CD8-positive, alpha-beta T cell (primary cell): ENCODE measurements at regions of chr14 and their contacts with region 1.

Region 1: DNA sequence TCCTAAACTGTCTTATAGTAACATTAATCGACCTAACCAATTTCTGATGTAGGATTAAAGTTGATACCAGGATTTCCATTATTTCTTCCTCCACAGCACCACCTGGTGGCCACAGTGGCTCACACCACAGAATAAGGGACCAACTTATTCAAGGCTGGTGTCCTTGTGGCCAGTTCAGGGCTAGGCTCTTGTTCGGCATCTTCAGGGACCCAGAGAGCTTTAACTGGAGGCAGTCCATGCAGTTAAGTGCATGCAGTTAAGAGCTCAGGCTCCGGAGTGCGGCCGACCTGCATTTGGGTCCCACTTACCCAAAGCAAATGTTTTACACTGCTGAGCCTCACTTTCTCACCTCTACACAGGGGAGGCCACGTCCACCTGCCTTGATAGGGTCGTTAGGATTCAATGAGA is 42.0 kb upstream of the GPR68 start:
- DNase-seq: peak; percentile 62 to 87 (median 81)
- ATAC-seq: peak; percentile 83
- H3K4me3 ChIP-seq: no peak overlapping the region
- H3K4me3 Mint-ChIP-seq: no peak overlapping the region
- H3K27ac ChIP-seq: no peak overlapping the region
- H3K27ac Mint-ChIP-seq: peak overlapping the region; percentile 19
- H3K4me1 ChIP-seq: no peaks in the 10 kb centered on the region
- H3K4me1 Mint-ChIP-seq: peaks cover 5% of the 10 kb centered on the region
- H3K27me3 ChIP-seq: no peaks in the 10 kb centered on the region
- H3K27me3 Mint-ChIP-seq: no peaks in the 10 kb centered on the region
- CTCF ChIP-seq: peak; percentile 90

Region 2: DNA sequence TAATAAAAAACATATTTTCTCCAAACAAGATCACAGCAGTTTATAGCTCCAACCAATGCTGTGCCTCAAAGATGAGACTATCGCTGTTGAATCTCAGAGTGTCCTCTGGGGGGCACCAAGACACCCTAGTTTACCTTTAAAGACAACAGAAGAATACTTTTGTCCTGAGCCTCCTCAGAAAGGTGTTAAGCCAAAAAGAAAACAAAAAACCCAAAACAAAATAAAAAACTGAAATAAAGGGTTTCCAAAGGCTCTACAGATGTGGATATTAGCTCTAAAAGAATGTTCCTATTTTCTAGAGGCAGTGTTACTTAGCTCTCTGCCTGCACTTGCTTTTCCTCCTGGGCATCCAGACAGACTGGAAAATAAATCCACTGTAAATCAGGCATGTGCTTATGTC is 383.4 kb before region 1 on chr14:
- CTCF ChIA-PET with region 1: interaction called, 15 read pairs
- POLR2A ChIA-PET with region 1: no interaction called
- intact Hi-C with region 1: loop called (anchors 2 kb)
- DNase-seq: peak; percentile 12 to 77 (median 59)
- ATAC-seq: peak; percentile 83
- H3K4me3 ChIP-seq: no peak overlapping the region
- H3K4me3 Mint-ChIP-seq: no peak overlapping the region
- H3K27ac ChIP-seq: no peak overlapping the region
- H3K27ac Mint-ChIP-seq: no peak overlapping the region
- H3K4me1 ChIP-seq: no peaks in the 10 kb centered on the region
- H3K4me1 Mint-ChIP-seq: no peaks in the 10 kb centered on the region
- H3K27me3 ChIP-seq: no peaks in the 10 kb centered on the region
- H3K27me3 Mint-ChIP-seq: no peaks in the 10 kb centered on the region
- CTCF ChIP-seq: peak; percentile 83

Region 3: DNA sequence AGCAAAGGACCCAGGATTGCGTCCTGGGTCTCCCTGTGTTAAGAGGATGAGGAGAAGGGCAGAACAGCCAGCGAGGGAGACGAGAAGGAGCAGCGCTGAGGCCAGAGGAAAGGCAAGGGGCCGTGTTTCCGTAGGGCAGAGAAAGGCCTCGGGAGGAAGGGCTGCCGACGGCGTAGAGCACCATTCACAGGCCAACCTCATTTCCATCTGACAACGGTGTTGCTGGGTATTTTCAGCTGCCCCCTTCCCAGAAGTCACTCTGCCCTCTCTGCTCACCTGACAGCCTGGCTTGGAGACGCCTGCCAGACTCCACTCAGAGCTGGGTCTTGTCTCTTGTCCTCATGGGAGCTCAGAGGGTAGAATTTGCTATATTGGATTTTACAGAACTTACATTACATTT is 93.5 kb before region 1 on chr14:
- CTCF ChIA-PET with region 1: interaction called, 4 read pairs
- POLR2A ChIA-PET with region 1: no interaction called
- intact Hi-C with region 1: loop called in 1 of 2 experiments (anchors 5 kb)
- DNase-seq: no peak
- ATAC-seq: no peak
- H3K4me3 ChIP-seq: no peak overlapping the region
- H3K4me3 Mint-ChIP-seq: no peak overlapping the region
- H3K27ac ChIP-seq: no peak overlapping the region
- H3K27ac Mint-ChIP-seq: no peak overlapping the region
- H3K4me1 ChIP-seq: peaks cover 13% of the 10 kb centered on the region
- H3K4me1 Mint-ChIP-seq: peaks cover 20% of the 10 kb centered on the region
- H3K27me3 ChIP-seq: no peaks in the 10 kb centered on the region
- H3K27me3 Mint-ChIP-seq: no peaks in the 10 kb centered on the region
- CTCF ChIP-seq: no peak

Region 4: GRCh38 chr14:91228112-91229004 is 58.2 kb before region 1 on chr14:
- CTCF ChIA-PET with region 1: interaction called, 10 read pairs
- POLR2A ChIA-PET with region 1: interaction called, 6 read pairs
- intact Hi-C with region 1: loop called in 1 of 2 experiments (anchors 2 kb)
- DNase-seq: peak; percentile 36 to 96 (median 75)
- ATAC-seq: peak; percentile 77
- H3K4me3 ChIP-seq: no peak overlapping the region
- H3K4me3 Mint-ChIP-seq: peak overlapping the region; percentile 65
- H3K27ac ChIP-seq: peak overlapping the region; percentile 6 to 85
- H3K27ac Mint-ChIP-seq: peak overlapping the region; percentile 94
- H3K4me1 ChIP-seq: peaks cover 87% of the 10 kb centered on the region
- H3K4me1 Mint-ChIP-seq: peaks cover 89% of the 10 kb centered on the region
- H3K27me3 ChIP-seq: no peaks in the 10 kb centered on the region
- H3K27me3 Mint-ChIP-seq: no peaks in the 10 kb centered on the region
- CTCF ChIP-seq: no peak

Region 5: GRCh38 chr14:91249841-91250616 is 36.5 kb before region 1 on chr14:
- CTCF ChIA-PET with region 1: interaction called, 17 read pairs
- POLR2A ChIA-PET with region 1: interaction called, 5 read pairs
- intact Hi-C with region 1: no loop called
- DNase-seq: peak in 5 of 9 experiments; percentile 28 to 78 (median 45)
- ATAC-seq: no peak
- H3K4me3 ChIP-seq: no peak overlapping the region
- H3K4me3 Mint-ChIP-seq: peak overlapping the region; percentile 47
- H3K27ac ChIP-seq: peak overlapping the region; percentile 43 to 66
- H3K27ac Mint-ChIP-seq: peak overlapping the region; percentile 92
- H3K4me1 ChIP-seq: peaks cover 70% of the 10 kb centered on the region
- H3K4me1 Mint-ChIP-seq: peaks cover 78% of the 10 kb centered on the region
- H3K27me3 ChIP-seq: no peaks in the 10 kb centered on the region
- H3K27me3 Mint-ChIP-seq: no peaks in the 10 kb centered on the region
- CTCF ChIP-seq: no peak

Region 6: DNA sequence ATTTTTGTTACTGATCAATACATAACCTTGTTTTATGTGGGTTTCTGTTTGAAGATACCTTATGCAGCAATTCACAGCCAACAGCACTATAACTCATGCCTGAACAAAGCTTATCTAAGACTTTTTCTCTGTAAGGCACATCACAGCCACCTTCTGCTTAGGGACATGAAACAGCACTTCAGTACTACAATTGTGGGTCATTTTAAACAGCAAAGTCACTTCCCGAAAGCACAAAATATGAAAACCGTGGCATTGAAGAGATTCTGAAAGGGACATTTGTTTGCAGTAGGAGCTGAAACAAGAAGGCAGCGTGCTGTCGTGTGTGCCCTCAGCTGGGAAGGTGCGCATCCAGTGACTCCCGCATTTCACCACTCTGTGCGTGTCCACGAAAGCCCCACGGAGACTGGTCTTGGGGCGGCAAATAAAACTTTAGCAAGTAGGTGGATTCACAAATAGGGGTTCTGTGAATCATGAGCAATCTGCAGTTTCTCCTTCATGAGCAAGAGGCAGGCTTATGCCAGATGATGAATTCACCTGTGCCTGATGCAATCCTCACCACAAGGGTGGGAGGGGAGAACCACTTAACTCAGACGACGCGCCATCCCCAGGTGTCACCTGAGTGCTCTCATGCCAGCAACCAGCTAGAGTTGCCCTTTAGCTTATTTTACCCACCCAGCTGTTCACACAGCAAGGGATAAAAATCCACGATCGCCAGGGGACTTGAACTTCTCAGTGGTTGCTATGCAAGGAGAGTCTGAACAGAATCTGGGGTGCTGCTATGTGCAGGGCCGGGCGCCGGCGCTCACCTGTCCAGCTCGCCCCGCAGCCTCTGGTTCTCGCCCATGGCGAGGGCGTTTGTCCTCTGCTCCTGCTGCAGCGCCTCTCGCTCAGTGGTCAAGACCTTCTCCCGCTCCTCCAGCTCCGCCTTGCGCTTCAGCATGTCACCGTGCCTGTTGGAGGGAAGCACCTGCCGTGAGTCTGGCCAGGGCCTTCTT is 12.9 kb after region 1 on chr14:
- CTCF ChIA-PET with region 1: interaction called, 28 read pairs
- POLR2A ChIA-PET with region 1: no interaction called
- intact Hi-C with region 1: no loop called
- DNase-seq: no peak
- ATAC-seq: peak; percentile 38
- H3K4me3 ChIP-seq: no peak overlapping the region
- H3K4me3 Mint-ChIP-seq: no peak overlapping the region
- H3K27ac ChIP-seq: no peak overlapping the region
- H3K27ac Mint-ChIP-seq: peak overlapping the region; percentile 32
- H3K4me1 ChIP-seq: no peaks in the 10 kb centered on the region
- H3K4me1 Mint-ChIP-seq: peaks cover 11% of the 10 kb centered on the region
- H3K27me3 ChIP-seq: no peaks in the 10 kb centered on the region
- H3K27me3 Mint-ChIP-seq: no peaks in the 10 kb centered on the region
- CTCF ChIP-seq: no peak

Region 7: GRCh38 chr14:91311284-91311662 is 24.7 kb after region 1 on chr14:
- CTCF ChIA-PET with region 1: interaction called, 11 read pairs
- POLR2A ChIA-PET with region 1: no interaction called
- intact Hi-C with region 1: no loop called
- DNase-seq: peak; percentile 27 to 87 (median 64)
- ATAC-seq: peak; percentile 30
- H3K4me3 ChIP-seq: no peak overlapping the region
- H3K4me3 Mint-ChIP-seq: peak overlapping the region; percentile 64
- H3K27ac ChIP-seq: peak overlapping the region; percentile 66 to 75
- H3K27ac Mint-ChIP-seq: peak overlapping the region; percentile 95
- H3K4me1 ChIP-seq: peaks cover 41% of the 10 kb centered on the region
- H3K4me1 Mint-ChIP-seq: peaks cover 52% of the 10 kb centered on the region
- H3K27me3 ChIP-seq: no peaks in the 10 kb centered on the region
- H3K27me3 Mint-ChIP-seq: no peaks in the 10 kb centered on the region
- CTCF ChIP-seq: no peak